Psoas muscle (tissue), 8 donors: ENCODE measurements at regions of chr3 and their contacts with region 1.

Region 1: DNA sequence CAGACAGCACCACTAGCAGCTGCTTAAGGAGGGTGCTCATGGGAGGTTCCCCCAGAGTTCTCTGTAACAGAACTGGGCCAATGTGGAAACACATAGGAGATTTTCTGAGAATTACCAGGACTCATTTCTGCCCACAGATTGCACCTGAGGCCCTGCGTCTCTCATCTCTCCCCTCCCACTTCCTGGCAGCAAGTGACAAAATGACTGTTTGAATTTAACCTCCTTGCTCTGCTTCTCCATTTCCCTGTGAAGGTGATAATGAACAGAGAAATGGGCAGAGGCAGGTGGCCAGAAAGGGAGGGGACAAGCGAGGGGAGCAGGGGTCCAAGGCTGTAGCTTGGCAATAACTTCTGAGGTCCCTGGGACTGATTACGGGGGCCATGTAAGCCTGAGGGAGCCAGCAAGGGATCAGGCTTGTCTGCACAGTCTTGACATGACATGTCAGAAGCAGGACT is 8.0 kb downstream of the EPHB1 start:
- DNase-seq: no peak
- ATAC-seq: no peak
- H3K4me3 ChIP-seq: no peak overlapping the region
- H3K27ac ChIP-seq: no peak overlapping the region
- H3K4me1 ChIP-seq: peaks cover 21% of the 10 kb centered on the region
- H3K27me3 ChIP-seq: no peaks in the 10 kb centered on the region
- CTCF ChIP-seq: no peak

Region 2: GRCh38 chr3:134858441-134859035 is 55.5 kb after region 1 on chr3:
- intact Hi-C with region 1: loop called in 1 of 2 experiments (anchors 5 kb)
- DNase-seq: no peak
- ATAC-seq: no peak
- H3K4me3 ChIP-seq: no peak overlapping the region
- H3K27ac ChIP-seq: no peak overlapping the region
- H3K4me1 ChIP-seq: no peaks in the 10 kb centered on the region
- H3K27me3 ChIP-seq: no peaks in the 10 kb centered on the region
- CTCF ChIP-seq: no peak